ENCODE measurements at regions of chr12 and their contacts with region 1.

Region 1: GRCh38 chr12:69290545-69291277 is 51.3 kb downstream of the CPSF6 start:
- DNase-seq: peak; percentile 91
- H3K4me3 Mint-ChIP-seq: no peak overlapping the region
- H3K27ac Mint-ChIP-seq: no peak overlapping the region
- H3K4me1 Mint-ChIP-seq: peaks cover 1% of the 10 kb centered on the region
- H3K27me3 Mint-ChIP-seq: peaks cover 45% of the 10 kb centered on the region

Region 2: GRCh38 chr12:69639400-69640016 is 348.8 kb after region 1 on chr12:
- intact Hi-C with region 1: loop called (anchors 2 kb)
- DNase-seq: peak; percentile 88
- H3K4me3 Mint-ChIP-seq: no peak overlapping the region
- H3K27ac Mint-ChIP-seq: no peak overlapping the region
- H3K4me1 Mint-ChIP-seq: peaks cover 2% of the 10 kb centered on the region
- H3K27me3 Mint-ChIP-seq: peaks cover 2% of the 10 kb centered on the region